ENCODE measurements at regions of chr10 and their contacts with region 1.

Region 1: GRCh38 chr10:15719899-15720634 is at the start of gene ITGA8:
- DNase-seq: no peak
- H3K4me3 ChIP-seq: peak within 1 kb of the TSS; percentile 51
- H3K27me3 ChIP-seq: peaks cover 7% of the 10 kb centered on the region; the same call in 1 of the 2 replicates
- CTCF ChIP-seq: peak; percentile 63
- polyA plus RNA-seq, gene ITGA8: 10.1 and 11.3 TPM in 2 replicates

Region 2: DNA sequence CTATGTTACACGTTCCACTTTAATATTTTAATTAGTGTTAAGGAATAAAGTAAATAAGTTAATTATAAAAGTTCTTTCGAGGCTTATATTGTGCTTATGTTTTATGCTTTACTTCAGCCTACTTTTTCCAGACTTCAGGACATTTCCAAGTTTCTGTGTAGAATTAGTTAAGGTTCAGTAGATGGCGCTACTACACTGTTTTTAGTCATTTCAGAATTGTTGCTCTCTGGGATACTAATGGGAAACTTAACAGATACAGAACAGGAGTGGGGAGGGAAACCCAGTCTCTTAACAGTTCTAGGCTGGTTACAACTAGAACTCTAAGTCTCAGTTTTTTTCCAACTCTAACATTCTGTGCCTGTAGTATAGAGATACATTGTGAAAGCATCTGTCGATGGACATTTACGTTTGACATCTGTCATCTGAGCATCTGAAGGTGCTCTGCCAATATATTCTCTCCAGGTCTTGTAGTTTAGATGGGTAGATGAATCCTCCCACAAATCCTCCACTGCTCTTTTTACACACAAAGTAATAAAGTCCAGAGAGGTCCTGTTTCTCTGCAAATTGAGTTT is 292.1 kb before region 1 on chr10:
- CTCF ChIA-PET with region 1: interaction called, 124 read pairs
- POLR2A ChIA-PET with region 1: no interaction called
- DNase-seq: peak; percentile 12
- H3K4me3 ChIP-seq: no peak overlapping the region
- H3K27me3 ChIP-seq: no peaks in the 10 kb centered on the region
- CTCF ChIP-seq: peak; percentile 54

Region 3: GRCh38 chr10:15439341-15439842 is 280.7 kb before region 1 on chr10:
- CTCF ChIA-PET with region 1: interaction called, 124 read pairs
- POLR2A ChIA-PET with region 1: no interaction called
- DNase-seq: no peak
- H3K4me3 ChIP-seq: no peak overlapping the region
- H3K27me3 ChIP-seq: peaks cover 2% of the 10 kb centered on the region
- CTCF ChIP-seq: peak; percentile 64

Region 4: DNA sequence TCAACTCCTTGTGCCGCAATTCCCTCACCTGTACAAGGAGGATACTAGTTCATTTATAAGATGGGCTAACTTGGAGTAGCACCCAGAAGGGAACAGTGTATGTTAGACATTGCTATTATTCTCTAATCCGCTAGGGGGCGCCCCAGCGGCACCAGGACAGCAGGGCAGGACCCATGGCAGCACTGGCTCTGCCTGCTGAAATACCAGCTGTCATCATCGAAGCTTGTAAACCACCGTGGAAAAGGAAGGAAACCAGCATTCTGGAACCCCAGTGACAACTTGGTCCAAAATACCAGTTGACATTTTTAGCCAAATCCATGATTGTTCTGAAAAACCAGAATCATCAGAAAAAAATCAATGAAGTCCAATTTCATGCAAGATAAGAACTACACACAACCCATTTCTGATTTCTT is 134.8 kb before region 1 on chr10:
- CTCF ChIA-PET with region 1: interaction called, 14 read pairs
- POLR2A ChIA-PET with region 1: no interaction called
- DNase-seq: no peak
- H3K4me3 ChIP-seq: no peak overlapping the region
- H3K27me3 ChIP-seq: no peaks in the 10 kb centered on the region
- CTCF ChIP-seq: peak; percentile 86

Region 5: DNA sequence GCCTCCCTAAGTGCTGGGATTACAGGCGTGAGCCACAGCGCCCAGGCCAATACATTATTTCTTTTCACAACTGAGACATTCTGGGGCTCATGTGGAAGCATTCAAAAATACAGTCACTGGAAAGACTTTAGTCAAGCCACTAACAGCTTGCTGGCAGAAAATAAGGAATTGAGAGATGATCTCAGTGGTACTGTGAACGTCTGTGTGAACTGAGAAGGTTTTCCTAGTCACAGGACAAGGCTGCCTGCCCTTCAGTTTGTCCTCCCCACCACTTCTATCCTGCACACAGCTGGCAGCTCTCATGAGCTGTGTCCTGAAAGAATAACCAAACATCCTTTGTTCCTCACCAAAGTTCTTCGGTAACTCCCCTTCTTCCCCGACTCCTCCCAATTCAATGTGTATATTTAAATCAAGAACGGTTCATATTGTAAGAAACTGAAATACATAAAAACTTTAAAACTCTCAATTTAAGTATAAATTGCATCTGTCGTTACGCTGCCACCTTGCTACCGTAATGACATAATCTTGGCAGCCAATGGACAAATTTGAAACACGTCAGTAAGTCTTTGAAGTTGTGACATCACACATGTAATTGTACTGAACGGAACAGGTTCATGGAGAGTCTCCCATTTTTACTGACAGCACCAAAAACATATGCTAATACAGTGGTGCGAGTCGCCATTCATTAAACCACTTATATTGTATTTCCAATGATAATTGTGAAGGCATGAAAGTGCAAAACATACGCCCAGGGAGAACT is 31.2 kb after region 1 on chr10:
- CTCF ChIA-PET with region 1: no interaction called
- POLR2A ChIA-PET with region 1: no interaction called
- DNase-seq: no peak
- H3K4me3 ChIP-seq: no peak overlapping the region
- H3K27me3 ChIP-seq: peaks cover 4% of the 10 kb centered on the region
- CTCF ChIP-seq: no peak